ENCODE measurements at regions of chr4 and their contacts with region 1.

Region 1: GRCh38 chr4:168710353-168710946 is 213.6 kb downstream of the PALLD start:
- DNase-seq: peak in 1 of 2 donors; percentile 60
- H3K4me3 ChIP-seq: no peak overlapping the region
- H3K27ac ChIP-seq: peak overlapping the region; percentile 71 to 81
- H3K4me1 ChIP-seq: peaks cover 0 to 36% (median 21%) of the 10 kb centered on the region in 4 donors
- H3K27me3 ChIP-seq: no peaks in the 10 kb centered on the region
- CTCF ChIP-seq: peak; percentile 59 to 73

Region 2: DNA sequence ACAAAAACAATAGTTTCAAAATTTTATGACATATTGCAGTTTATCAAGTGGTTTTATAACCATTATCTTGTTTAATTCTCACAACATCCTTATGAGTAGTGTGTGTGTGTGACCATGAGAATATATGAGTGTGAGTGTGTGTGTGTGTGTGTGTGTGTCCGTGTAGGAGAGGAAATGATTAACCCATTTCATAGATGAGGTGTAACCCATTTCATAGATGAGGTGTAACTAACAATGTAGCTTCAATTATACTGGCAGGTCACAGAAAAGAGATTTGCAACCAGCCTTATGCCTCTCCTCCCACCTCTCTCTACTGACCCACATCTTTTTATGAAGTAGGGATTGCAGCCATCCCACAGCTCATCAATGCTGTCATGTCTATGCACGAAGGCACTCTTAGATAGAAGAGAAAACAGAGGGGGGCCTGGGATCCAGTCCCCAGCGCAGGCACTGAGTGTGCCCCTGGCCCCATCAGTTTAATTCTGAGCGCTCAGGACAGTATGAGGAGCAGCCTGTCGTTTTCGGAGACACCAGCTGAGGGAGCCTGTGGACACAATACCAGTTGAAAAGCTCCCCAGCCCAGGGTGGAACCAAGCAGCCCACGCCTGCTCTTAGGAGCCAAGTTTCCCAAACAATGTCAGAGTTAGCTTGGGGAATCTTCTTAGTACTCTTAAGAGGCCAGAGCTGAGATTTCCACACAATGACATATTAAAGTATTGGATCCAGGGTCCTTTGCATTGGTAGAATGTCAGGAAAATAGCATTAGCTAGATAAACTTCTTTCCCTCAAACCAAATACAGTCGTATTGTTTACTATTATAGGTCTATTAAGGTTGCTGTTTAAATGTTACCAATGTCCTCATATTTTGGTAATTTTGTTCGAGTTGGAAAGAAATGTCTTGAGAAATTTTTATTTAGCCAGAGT is 125.0 kb before region 1 on chr4:
- intact Hi-C with region 1: loop called (anchors 5 kb)
- DNase-seq: peak; percentile 89
- H3K4me3 ChIP-seq: no peak overlapping the region
- H3K27ac ChIP-seq: no peak overlapping the region
- H3K4me1 ChIP-seq: peaks cover 0 to 28% (median 23%) of the 10 kb centered on the region in 4 donors
- H3K27me3 ChIP-seq: no peaks in the 10 kb centered on the region
- CTCF ChIP-seq: peak; percentile 72 to 77

Region 3: GRCh38 chr4:168815379-168816345 is 105.2 kb after region 1 on chr4:
- intact Hi-C with region 1: loop called (anchors 1 kb)
- DNase-seq: no peak
- H3K4me3 ChIP-seq: peak overlapping the region; percentile 22 to 35
- H3K27ac ChIP-seq: peak overlapping the region; percentile 76 to 88
- H3K4me1 ChIP-seq: peaks cover 0 to 80% (median 52%) of the 10 kb centered on the region in 4 donors
- H3K27me3 ChIP-seq: no peaks in the 10 kb centered on the region
- CTCF ChIP-seq: no peak

Region 4: GRCh38 chr4:168907119-168907698 is 196.8 kb after region 1 on chr4:
- intact Hi-C with region 1: loop called (anchors 5 kb)
- DNase-seq: no peak
- H3K4me3 ChIP-seq: no peak overlapping the region
- H3K27ac ChIP-seq: peak overlapping the region; percentile 46 to 64
- H3K4me1 ChIP-seq: peaks cover 0 to 65% (median 12%) of the 10 kb centered on the region in 4 donors
- H3K27me3 ChIP-seq: no peaks in the 10 kb centered on the region
- CTCF ChIP-seq: no peak

Region 5: DNA sequence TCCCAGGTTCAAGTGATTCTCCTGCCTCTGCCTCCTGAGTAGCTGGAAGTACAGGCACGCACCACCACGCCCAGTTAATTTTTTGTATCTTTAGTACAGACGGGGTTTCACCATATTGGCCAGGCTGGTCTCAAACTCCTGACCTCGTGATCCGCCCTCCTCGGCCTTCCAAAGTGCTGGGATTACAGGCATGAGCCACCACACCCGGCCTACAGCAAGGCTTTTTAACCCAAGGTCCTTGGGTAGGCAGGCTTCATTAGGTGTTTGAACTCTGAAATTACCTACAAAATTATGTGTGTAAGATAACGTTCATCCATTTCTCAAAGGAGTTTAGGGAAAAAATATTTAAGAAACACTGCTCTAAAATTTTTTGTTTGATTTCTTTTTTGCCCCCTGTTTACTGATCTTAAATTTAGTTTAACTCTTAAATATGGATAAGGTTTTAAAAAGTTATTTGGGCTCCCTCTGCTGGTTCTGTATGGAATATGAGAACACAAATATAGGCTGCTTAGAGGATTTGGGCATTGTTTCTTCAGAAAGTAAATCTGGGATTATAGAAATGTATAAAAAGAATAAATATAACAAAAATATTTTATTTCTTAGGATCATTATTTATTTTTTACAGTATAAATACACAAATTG is 206.8 kb after region 1 on chr4:
- intact Hi-C with region 1: loop called (anchors 2 kb)
- DNase-seq: no peak
- H3K4me3 ChIP-seq: no peak overlapping the region
- H3K27ac ChIP-seq: peak overlapping the region; percentile 31 to 54
- H3K4me1 ChIP-seq: peaks cover 0 to 40% (median 0%) of the 10 kb centered on the region in 4 donors
- H3K27me3 ChIP-seq: no peaks in the 10 kb centered on the region
- CTCF ChIP-seq: peak; percentile 50 to 58

Measured in tibial artery (tissue), 4 donors.